A549 (cell line): ENCODE measurements at regions of chr10 and their contacts with region 1.

Region 1: GRCh38 chr10:70940834-70941568 is 52.6 kb upstream of the PCBD1 start:
- DNase-seq: no peak
- ATAC-seq: no peak
- H3K4me3 ChIP-seq: no peak overlapping the region
- H3K27ac ChIP-seq: no peak overlapping the region
- H3K4me1 ChIP-seq: no peaks in the 10 kb centered on the region
- CTCF ChIP-seq: no peak
- EP300 ChIP-seq: no peak
- POLR2A ChIP-seq: no peak
- RAD21 ChIP-seq: no peak

Region 2: GRCh38 chr10:70956029-70956759 is 15.2 kb after region 1 on chr10:
- CTCF ChIA-PET with region 1: interaction called, 14 read pairs
- POLR2A ChIA-PET with region 1: interaction called, 3 read pairs
- DNase-seq: peak; percentile 19 to 44
- ATAC-seq: peak; percentile 68 to 93; a peak in 4 of 6 replicates
- H3K4me3 ChIP-seq: no peak overlapping the region
- H3K27ac ChIP-seq: no peak overlapping the region
- H3K4me1 ChIP-seq: no peaks in the 10 kb centered on the region
- CTCF ChIP-seq: no peak
- EP300 ChIP-seq: no peak
- POLR2A ChIP-seq: no peak
- RAD21 ChIP-seq: peak in 1 of 2 experiments; percentile 24; a peak in 1 of 5 replicates